ENCODE measurements at regions of chr5 and their contacts with region 1.

Region 1: DNA sequence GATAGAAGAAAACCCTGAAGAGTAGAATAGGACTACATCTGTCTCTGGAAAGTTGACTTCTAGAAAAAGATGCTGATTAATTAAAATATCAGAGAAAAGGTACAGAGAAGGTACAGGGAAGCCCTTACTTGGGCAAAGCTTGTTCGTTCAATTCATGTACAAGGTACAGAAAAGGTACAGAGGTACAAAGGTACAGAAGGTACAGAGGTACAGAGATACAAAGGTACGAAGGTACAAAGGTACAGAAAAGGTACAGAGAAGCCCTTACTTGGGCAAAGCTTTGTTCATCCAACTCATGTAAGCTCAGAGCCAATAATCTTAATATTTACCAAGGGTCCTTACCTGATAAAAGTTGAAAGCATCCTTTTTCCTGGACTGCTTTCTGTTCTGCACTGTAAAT is 182.3 kb downstream of the PCSK1 start:
- DNase-seq: no peak
- ATAC-seq: no peak
- H3K4me3 ChIP-seq: no peak overlapping the region
- H3K27ac ChIP-seq: no peak overlapping the region
- H3K4me1 ChIP-seq: no peaks in the 10 kb centered on the region
- H3K27me3 ChIP-seq: no peaks in the 10 kb centered on the region
- CTCF ChIP-seq: no peak
- EP300 ChIP-seq: no peak
- POLR2A ChIP-seq: no peak
- RAD21 ChIP-seq: no peak

Region 2: GRCh38 chr5:96262105-96262504 is 11.3 kb after region 1 on chr5:
- CTCF ChIA-PET with region 1: interaction called, 3 read pairs
- POLR2A ChIA-PET with region 1: no interaction called
- RAD21 ChIA-PET with region 1: no interaction called
- SMC1A ChIA-PET with region 1: interaction called, 10 read pairs
- in situ Hi-C with region 1: no loop called
- intact Hi-C with region 1: no loop called
- DNase-seq: no peak
- ATAC-seq: no peak
- H3K4me3 ChIP-seq: no peak overlapping the region
- H3K27ac ChIP-seq: no peak overlapping the region
- H3K4me1 ChIP-seq: no peaks in the 10 kb centered on the region; the same call in none of the 2 replicates
- H3K27me3 ChIP-seq: no peaks in the 10 kb centered on the region
- CTCF ChIP-seq: no peak
- EP300 ChIP-seq: no peak
- POLR2A ChIP-seq: no peak
- RAD21 ChIP-seq: no peak

Measured in GM12878 (cell line).